Astrocyte of the cerebellum (primary cell): ENCODE measurements at regions of chr3 and their contacts with region 1.

Region 1: GRCh38 chr3:130374030-130374429 is 28.6 kb downstream of the COL6A5 start:
- DNase-seq: no peak
- H3K4me3 ChIP-seq: no peak overlapping the region
- CTCF ChIP-seq: no peak

Region 2: GRCh38 chr3:130276203-130276803 is 97.7 kb before region 1 on chr3:
- in situ Hi-C with region 1: no loop called
- DNase-seq: peak; percentile 63
- H3K4me3 ChIP-seq: no peak overlapping the region
- CTCF ChIP-seq: peak; percentile 97

Region 3: DNA sequence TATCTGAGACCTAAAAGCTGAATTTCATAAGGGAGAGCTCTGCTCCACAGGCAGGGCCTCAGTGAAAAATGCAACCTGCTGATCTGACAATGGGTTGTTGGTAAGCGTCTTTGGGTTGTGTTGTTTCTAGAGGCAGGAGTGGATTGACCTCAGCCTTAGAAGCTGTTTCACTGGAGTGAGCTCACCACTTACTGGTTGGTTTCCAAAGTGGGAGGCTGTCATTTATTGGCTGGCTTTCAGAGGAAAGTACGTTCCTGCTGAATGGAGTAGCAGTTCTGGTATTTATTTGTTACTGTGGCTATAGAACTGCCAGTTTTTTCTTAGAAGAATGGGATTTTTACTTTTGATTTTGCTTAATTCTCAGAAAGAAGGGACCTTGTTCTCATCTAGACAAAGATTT is 57.9 kb before region 1 on chr3:
- in situ Hi-C with region 1: loop called (anchors 5 kb)
- DNase-seq: peak; percentile 57
- H3K4me3 ChIP-seq: no peak overlapping the region
- CTCF ChIP-seq: no peak

Region 4: DNA sequence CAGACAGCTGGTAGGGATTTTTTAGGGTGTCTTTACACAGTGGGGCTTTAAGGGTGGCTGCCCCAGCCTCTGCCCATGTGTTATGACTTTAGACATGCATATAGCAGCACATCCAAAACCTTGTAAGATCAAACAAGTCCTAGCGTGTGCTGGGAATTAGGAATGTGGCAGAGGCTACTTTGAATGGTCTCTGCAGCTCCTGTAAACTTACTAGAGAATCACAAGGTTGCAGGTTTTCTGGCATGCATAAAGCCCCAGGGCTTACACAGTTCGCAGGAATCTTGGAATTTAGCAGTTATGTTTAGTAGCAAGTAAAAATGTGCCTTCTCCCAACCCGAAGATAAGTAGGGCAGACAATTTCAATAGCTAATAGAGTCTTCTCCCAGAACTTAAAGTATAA is 96.1 kb after region 1 on chr3:
- in situ Hi-C with region 1: no loop called
- DNase-seq: no peak
- H3K4me3 ChIP-seq: no peak overlapping the region
- CTCF ChIP-seq: no peak